ENCODE measurements at regions of chr3 and their contacts with region 1.

Region 1: GRCh38 chr3:45929042-45929679 is 14.1 kb upstream of the CXCR6 start:
- DNase-seq: no peak
- ATAC-seq: peak; percentile 100
- H3K4me3 ChIP-seq: no peak overlapping the region
- H3K27ac ChIP-seq: no peak overlapping the region
- H3K4me1 ChIP-seq: no peaks in the 10 kb centered on the region; the same call in 1 of the 2 replicates
- H3K27me3 ChIP-seq: no peaks in the 10 kb centered on the region
- CTCF ChIP-seq: peak; percentile 94 to 98 (median 97); a peak in 5 of 6 replicates
- EP300 ChIP-seq: no peak
- POLR2A ChIP-seq: no peak
- RAD21 ChIP-seq: peak; percentile 99

Region 2: DNA sequence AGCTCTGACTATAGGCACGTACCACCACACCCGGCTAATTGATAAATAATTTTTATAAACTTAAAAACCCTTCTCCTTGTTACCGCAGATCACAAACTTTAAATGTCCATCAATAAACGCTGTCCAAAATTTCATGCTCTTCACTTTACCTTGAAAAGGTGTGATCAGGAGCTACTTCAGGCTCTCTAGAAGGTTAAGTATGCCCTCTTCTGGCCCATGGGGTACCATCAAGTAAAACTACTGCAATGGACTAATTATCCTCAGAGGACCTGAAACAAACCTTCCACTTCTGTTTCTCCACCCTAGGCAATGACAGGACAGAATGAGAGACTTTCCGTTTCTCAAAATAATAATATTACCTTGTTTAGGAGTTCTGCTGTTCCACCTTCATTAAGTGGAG is 96.5 kb before region 1 on chr3:
- CTCF ChIA-PET with region 1: interaction called, 12 read pairs
- POLR2A ChIA-PET with region 1: no interaction called
- RAD21 ChIA-PET with region 1: interaction called, 5 read pairs
- SMC1A ChIA-PET with region 1: interaction called, 7 read pairs
- in situ Hi-C with region 1: no loop called
- intact Hi-C with region 1: no loop called
- DNase-seq: no peak
- ATAC-seq: peak; percentile 53; the same call in 1 of the 3 replicates
- H3K4me3 ChIP-seq: no peak overlapping the region
- H3K27ac ChIP-seq: no peak overlapping the region
- H3K4me1 ChIP-seq: no peaks in the 10 kb centered on the region
- H3K27me3 ChIP-seq: no peaks in the 10 kb centered on the region
- CTCF ChIP-seq: peak; percentile 39 to 50 (median 46); a peak in 5 of 6 replicates
- EP300 ChIP-seq: no peak
- POLR2A ChIP-seq: no peak
- RAD21 ChIP-seq: peak; percentile 51

Region 3: GRCh38 chr3:46049116-46049515 is 120.0 kb after region 1 on chr3:
- CTCF ChIA-PET with region 1: no interaction called
- POLR2A ChIA-PET with region 1: no interaction called
- RAD21 ChIA-PET with region 1: no interaction called
- SMC1A ChIA-PET with region 1: no interaction called
- in situ Hi-C with region 1: no loop called
- intact Hi-C with region 1: no loop called
- DNase-seq: no peak
- ATAC-seq: no peak
- H3K4me3 ChIP-seq: no peak overlapping the region
- H3K27ac ChIP-seq: no peak overlapping the region
- H3K4me1 ChIP-seq: no peaks in the 10 kb centered on the region
- H3K27me3 ChIP-seq: no peaks in the 10 kb centered on the region
- CTCF ChIP-seq: no peak
- EP300 ChIP-seq: no peak
- POLR2A ChIP-seq: no peak
- RAD21 ChIP-seq: no peak